ENCODE measurements at regions of chr10 and their contacts with region 1.

Region 1: DNA sequence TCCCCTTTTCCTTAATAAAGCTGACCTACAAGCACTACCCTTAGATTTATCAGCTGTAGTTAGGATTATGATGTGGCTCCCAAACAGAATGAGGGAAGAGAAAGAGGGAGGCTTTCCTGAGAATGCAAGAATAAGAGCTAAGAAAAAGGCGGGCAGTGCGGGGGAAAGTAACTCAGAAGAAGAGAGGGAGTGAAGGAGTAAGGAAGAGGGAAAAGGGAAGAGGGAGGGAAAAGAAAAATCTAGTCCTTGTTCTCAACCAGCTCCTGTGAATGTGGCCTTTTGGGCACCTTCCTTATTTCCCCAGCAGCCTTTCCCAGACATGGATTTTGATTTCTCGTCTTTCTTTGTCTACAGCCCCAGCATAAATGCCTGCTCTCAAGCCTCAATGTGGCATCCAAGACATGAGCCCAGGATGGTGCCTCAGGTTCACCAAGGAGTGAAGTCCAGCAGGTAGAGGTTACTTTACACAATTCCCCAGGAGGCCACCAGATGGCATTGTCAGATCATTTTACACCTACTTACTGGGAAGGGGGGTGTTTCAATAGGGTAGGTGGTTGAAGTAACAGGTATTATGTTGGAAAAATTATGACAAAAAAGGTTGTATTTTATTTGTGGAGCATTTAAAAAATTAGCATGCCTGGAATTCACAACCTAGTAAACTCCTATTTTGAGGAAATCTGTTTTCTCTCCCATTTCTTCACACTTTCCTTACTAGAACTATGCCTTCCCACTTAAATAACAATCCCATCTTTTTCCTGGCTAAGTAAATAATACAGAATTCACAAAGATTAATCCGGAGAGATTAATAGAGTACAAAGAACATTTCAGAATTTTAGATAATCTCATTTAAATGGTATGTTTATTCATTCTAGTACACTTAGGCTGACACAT is 106.5 kb downstream of the HTR7 start:
- DNase-seq: peak; percentile 41 to 44
- H3K4me3 ChIP-seq: no peak overlapping the region
- H3K27ac ChIP-seq: no peak overlapping the region
- H3K4me1 ChIP-seq: no peaks in the 10 kb centered on the region
- H3K27me3 ChIP-seq: no peaks in the 10 kb centered on the region
- CTCF ChIP-seq: peak; percentile 35 to 79 (median 55)
- POLR2A ChIP-seq: no peak

Region 2: DNA sequence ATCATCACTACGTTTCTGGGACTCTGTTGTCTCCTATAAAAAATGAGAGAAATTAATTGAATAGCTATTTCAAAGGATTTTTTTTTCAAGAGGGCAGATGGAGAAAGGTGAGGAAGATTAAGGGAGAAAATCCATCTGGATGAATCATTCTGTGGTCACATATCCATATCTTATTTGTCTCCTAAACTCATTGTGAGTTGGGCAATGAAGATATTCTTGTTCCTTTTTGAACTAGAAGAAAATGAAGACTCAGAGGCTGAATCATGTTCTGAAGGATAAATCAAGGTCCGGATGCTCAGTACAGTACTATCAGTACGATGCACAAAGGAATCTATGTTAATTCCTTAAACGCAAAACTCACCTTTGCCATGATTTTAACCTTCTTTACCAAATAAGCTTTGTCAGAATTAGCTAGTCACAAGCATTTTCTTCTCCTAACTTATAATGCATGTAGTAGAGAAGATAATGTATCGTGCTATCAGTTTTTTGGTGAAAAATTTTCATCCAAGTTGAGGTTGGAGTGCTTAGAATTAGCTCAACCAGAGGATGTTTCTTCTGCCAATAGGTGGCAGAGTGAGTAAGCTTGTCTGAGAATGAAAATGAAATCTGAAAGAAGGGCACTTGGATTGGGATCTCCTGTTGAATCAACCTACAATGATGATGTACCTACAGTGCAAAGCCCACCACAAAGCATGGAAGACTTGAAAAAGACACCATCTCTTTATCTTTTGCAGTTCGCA is 603.1 kb before region 1 on chr10:
- intact Hi-C with region 1: no loop called
- DNase-seq: no peak
- H3K4me3 ChIP-seq: no peak overlapping the region
- H3K27ac ChIP-seq: no peak overlapping the region
- H3K4me1 ChIP-seq: no peaks in the 10 kb centered on the region
- H3K27me3 ChIP-seq: no peaks in the 10 kb centered on the region
- CTCF ChIP-seq: no peak
- POLR2A ChIP-seq: no peak

Region 3: DNA sequence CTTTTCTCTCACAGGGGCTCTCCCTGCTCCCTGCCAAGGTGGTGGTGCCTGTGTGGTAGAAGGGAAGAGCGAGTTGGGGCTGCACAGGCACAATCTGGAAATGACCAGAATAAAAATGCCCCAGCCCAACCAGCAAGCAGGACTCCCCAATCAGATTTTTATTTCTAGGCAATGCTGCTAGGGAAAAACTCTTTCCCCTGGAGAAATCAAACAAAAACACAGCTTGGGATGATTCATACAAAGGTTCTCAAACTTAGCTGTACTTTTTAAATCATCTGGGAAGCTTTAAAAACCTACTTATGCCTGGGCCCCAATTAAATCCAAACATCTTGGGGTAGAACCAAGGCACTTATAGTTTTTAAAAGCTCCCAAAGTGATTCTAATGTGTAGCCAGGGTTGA is 136.7 kb before region 1 on chr10:
- intact Hi-C with region 1: no loop called
- DNase-seq: no peak
- H3K4me3 ChIP-seq: no peak overlapping the region
- H3K27ac ChIP-seq: no peak overlapping the region
- H3K4me1 ChIP-seq: no peaks in the 10 kb centered on the region
- H3K27me3 ChIP-seq: no peaks in the 10 kb centered on the region
- CTCF ChIP-seq: no peak
- POLR2A ChIP-seq: no peak

Region 4: DNA sequence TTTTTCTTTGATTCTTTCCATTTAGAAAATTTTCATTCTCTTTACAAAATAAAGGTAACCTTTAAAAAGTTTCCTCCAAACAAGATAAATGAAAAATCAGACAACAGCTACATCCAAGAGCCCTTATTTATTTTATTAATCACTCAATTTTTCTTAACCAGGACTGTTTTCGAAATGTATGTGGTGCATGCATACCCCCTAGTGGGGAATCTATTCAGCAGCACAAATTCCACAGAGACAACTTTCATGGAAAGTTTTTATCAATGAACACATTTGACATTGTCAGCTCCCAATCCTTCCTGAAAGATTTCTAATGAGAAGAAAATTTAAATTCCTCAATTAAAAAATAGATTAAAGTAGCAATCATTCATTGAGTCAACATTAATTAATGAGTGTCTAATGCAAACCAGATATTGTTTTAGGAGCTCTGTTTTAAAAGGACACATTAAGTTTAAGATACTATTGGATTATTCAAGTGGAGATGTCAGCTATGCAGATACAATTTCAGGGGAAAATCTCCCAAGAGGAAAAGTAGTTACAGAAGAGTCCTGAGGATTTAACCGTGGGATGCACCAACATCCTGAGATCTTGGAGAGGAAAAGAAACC is 111.7 kb after region 1 on chr10:
- intact Hi-C with region 1: loop called (anchors 10 kb)
- DNase-seq: no peak
- H3K4me3 ChIP-seq: no peak overlapping the region
- H3K27ac ChIP-seq: no peak overlapping the region
- H3K4me1 ChIP-seq: peaks cover 0 to 5% of the 10 kb centered on the region in 2 donors
- H3K27me3 ChIP-seq: no peaks in the 10 kb centered on the region
- CTCF ChIP-seq: peak in 5 of 6 experiments; percentile 38 to 66 (median 59)
- POLR2A ChIP-seq: no peak

Measured in thyroid gland (tissue), 4 donors.